ENCODE measurements at regions of chr2 and their contacts with region 1.

Region 1: DNA sequence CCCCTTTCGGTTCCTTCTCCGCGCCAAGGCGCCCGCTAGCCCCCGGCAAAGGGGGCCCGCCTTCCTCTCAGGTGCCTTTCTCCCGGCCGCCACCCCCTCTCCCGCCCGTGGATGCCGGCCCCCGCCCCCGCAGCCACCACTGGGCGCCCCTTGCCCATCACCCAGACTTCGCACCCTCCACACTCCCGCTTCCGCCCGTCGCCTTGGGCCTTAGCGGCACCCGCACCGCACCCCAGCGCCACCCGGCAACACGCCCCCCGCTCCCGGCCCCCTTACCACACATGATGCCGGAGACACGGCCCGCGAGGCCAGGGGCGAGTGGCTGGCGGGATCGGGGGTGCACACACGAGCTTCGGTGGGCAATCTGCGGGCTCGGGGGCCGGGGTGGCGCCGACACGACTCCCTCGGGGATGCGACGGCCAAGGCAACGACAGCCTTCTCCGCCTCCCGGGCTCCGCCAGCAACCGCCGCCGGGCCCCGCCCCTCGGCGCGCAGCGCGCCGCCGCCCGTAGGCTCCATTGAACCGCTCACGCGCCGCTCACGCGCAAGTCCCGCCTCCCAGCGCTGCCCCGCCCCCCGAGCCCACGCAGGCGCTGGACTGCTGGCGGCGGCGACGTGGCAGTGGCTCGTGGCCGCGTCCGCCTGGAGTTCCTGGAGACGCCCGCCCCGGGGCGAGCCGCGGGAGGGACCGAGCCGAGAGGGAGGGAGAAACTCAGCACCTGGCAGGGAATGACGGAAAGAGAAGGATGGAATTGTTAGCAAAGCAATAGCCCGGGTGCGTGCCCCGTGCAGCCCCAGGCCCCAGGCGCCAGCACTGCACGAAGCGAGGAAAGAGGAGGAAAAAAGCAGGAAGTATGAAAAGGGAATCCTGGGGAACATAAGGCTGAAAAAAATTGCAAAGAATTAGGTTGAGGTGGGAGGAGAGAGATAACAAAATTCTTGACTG is at the start of gene GFPT1:
- DNase-seq: peak; percentile 97
- total RNA-seq, gene GFPT1: 85.7 TPM

Region 2: DNA sequence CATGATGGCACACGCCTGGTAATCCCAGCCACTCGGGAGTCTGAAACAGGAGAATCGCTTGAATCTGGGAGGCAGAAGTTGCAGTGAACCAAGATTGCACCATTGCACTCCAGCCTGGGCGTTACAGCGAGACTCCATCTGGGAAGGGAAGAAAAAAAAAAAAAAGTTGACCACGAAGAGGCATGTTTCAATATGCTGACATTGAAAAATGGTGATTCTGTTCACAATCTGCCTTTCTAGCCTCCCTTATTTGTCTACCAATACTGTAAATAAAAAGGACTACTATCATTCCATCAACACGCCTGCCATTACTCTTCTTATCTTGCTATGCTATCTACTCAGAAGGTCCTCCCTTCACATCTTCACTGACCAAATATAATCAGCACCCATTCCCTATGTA is 18.5 kb before region 1 on chr2:
- intact Hi-C with region 1: no loop called
- DNase-seq: no peak

Region 3: GRCh38 chr2:69436938-69437750 is 50.1 kb after region 1 on chr2 and contains the start of gene NFU1:
- intact Hi-C with region 1: loop called (anchors 5 kb)
- DNase-seq: peak; percentile 95
- total RNA-seq, gene NFU1: 90.3 TPM

Measured in cardiac septum (tissue), 1 donor.